Panc1 (cell line): ENCODE measurements at regions of chr17 and their contacts with region 1.

Region 1: DNA sequence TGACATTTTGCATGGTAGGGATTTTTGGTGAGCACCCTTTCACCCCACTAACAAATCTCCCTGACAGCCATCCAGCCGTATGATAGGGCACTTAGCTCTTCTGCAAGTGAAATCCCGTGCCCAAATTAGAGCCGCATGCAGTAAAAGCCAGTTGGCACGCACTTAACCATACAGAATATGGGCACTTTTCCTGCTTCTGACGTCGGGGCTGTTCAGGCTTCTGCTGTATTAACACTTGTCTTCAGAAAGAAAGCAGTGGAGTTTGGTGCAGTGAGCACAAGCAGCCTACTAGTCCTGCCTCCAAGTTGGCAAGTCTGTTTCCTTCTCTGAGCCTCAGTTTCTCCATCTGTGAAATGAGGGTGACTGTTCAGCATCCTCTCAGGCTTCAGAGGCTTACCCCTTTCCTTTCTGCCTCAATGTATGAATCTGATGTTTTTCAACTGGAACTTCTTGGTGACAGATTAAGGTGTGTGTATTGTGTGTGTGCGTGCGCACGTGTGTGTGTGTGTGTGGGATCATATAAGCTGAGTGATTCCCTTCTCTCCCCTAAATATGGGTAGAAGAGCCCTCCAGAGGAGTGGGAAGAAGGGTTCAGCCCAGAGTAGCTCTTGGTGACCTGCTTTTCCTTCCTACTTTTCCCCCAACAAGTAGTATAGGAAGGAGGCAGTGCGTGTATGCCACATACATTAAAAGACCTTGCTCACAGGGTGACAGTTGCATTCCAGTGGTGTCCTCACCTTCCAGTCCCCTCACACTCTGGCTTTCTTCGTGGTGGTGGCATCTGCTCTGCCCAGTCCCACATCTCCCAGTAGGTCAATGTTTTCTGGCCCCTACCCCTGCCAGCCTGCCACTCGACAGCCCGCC is 19.0 kb downstream of the IGF2BP1 start:
- DNase-seq: no peak
- ATAC-seq: peak; percentile 52
- H3K4me3 ChIP-seq: no peak overlapping the region
- H3K27ac ChIP-seq: no peak overlapping the region
- H3K4me1 ChIP-seq: peaks cover 28% of the 10 kb centered on the region
- H3K27me3 ChIP-seq: no peaks in the 10 kb centered on the region
- CTCF ChIP-seq: no peak

Region 2: DNA sequence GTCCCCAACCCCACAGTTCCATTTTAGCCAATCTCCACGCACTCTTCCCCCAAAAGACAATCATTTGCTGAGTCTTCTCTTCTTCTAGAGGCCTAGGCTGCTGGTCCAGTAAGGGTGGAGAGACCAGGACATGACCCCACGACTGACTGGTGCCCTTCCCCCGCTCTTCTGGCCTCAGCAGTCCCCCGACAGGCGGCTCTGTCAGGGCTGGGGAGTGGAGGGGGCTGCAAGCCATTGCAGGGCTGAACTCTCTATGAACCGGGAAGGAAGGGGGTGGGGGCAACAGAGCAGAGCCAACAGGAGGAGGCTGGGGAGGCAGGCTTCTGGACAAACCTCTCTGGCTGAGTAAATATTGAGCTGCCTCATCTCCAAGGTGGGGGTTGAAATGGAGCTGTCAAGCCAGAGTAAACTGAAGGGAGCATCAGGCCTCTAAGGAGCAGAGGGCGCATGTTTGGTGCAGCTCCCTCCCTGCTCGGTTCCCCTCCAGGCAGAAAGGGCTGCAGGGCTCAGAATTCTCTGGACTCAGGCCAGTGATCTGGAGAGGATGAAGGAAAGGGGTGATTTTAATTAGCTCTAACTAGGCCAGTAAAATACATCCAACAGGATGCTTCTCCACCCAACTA is 494.0 kb before region 1 on chr17:
- CTCF ChIA-PET with region 1: no interaction called
- POLR2A ChIA-PET with region 1: no interaction called
- in situ Hi-C with region 1: no loop called
- intact Hi-C with region 1: no loop called
- DNase-seq: no peak
- ATAC-seq: 0 out of 2 replicates have a peak, but pooled peaks have one; percentile 39
- H3K4me3 ChIP-seq: no peak overlapping the region
- H3K27ac ChIP-seq: peak overlapping the region; percentile 1; the same call in 1 of the 2 replicates
- H3K4me1 ChIP-seq: peaks cover 17% of the 10 kb centered on the region
- H3K27me3 ChIP-seq: no peaks in the 10 kb centered on the region
- CTCF ChIP-seq: no peak

Region 3: DNA sequence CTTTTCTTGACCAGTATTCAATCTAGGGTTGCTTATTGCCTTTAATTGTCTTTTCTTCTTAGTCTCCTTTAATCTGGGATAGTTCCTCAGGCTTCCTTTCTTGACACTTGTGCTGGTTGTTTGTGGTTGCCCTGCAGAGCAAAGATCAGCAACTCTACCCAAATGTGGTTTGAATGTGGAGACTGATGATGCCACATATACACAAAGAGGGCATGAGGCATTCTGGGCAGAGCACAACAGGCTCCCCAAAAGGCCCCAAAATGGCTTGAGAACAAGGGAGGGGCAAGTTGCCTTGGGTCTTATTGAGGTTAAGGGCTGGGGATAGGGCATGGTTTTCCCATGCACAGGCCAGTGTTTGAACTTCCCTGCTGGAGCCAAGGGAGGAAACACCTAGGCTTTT is 360.2 kb before region 1 on chr17:
- CTCF ChIA-PET with region 1: no interaction called
- POLR2A ChIA-PET with region 1: no interaction called
- in situ Hi-C with region 1: no loop called
- intact Hi-C with region 1: no loop called
- DNase-seq: no peak
- ATAC-seq: no peak
- H3K4me3 ChIP-seq: no peak overlapping the region
- H3K27ac ChIP-seq: no peak overlapping the region
- H3K4me1 ChIP-seq: no peaks in the 10 kb centered on the region
- H3K27me3 ChIP-seq: no peaks in the 10 kb centered on the region
- CTCF ChIP-seq: no peak

Region 4: DNA sequence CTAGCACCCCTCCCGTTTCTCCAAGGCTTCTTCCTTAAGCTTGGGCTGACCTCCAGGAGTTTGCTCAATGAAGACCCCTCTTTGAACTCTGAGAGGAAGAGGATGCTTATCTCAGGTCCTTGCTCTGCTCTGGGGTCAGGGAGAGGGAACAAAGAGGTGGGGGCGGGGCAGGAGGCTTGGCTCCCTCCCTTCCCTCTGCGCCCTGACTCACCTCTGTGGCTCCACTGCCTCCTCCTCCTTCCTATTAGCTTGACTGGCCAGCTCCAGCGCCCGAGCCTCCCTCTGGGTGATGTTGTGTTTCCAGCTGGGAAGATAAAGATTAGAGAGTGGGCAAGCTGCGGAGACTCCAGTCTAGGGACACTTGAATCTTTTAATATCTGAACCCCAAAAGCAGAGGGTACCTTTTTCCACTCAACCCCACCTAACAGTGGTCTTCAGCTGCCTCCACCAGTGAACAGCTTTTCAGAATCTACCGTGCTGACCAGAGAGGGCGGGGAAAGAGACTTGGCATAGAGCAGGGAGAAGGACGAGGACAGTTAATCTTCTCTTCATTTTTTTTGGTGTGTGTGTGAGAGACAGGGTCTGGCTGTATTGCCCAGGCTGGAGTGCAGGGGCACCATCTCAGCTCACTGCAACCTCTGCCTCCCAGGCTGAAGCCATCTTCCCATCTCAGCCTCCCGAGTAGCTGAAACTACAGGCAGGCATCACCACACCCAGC is 54.5 kb before region 1 on chr17:
- CTCF ChIA-PET with region 1: no interaction called
- POLR2A ChIA-PET with region 1: interaction called, 12 read pairs
- in situ Hi-C with region 1: no loop called
- intact Hi-C with region 1: no loop called
- DNase-seq: no peak
- ATAC-seq: peak; percentile 92
- H3K4me3 ChIP-seq: peak overlapping the region in 1 of 2 experiments; percentile 38; a peak in 2 of 4 replicates
- H3K27ac ChIP-seq: peak overlapping the region; percentile 25
- H3K4me1 ChIP-seq: peaks cover 17% of the 10 kb centered on the region
- H3K27me3 ChIP-seq: no peaks in the 10 kb centered on the region
- CTCF ChIP-seq: no peak

Region 5: DNA sequence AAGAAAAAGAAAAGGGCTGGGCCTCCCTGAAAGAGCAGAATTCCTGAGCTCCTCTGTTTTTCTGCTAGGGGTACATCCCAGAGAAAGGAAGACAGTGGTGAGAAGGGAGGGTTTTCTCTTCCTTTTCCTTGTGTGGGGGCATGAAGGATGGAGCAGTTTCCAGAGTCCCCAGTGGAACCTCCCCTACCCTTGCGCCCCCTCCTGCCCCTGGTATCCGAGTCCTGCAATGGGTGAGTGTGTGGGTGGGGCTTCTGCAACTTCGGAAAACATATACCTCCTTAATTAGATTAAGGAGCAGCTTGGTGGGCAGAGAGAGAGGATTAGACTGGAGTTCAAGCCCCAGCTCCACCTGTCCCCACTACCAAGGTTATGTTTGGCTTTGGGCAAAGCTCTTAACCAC is 42.4 kb before region 1 on chr17:
- CTCF ChIA-PET with region 1: interaction called, 14 read pairs
- POLR2A ChIA-PET with region 1: no interaction called
- in situ Hi-C with region 1: no loop called
- intact Hi-C with region 1: no loop called
- DNase-seq: no peak
- ATAC-seq: no peak
- H3K4me3 ChIP-seq: no peak overlapping the region
- H3K27ac ChIP-seq: peak overlapping the region; percentile 81; the same call in 1 of the 2 replicates
- H3K4me1 ChIP-seq: peaks cover 37% of the 10 kb centered on the region
- H3K27me3 ChIP-seq: no peaks in the 10 kb centered on the region
- CTCF ChIP-seq: no peak

Region 6: GRCh38 chr17:48985436-48986245 is 30.5 kb before region 1 on chr17:
- CTCF ChIA-PET with region 1: interaction called, 3 read pairs
- POLR2A ChIA-PET with region 1: interaction called, 12 read pairs
- in situ Hi-C with region 1: no loop called
- intact Hi-C with region 1: no loop called
- DNase-seq: no peak
- ATAC-seq: peak; percentile 17; the same call in 1 of the 2 replicates
- H3K4me3 ChIP-seq: no peak overlapping the region
- H3K27ac ChIP-seq: no peak overlapping the region
- H3K4me1 ChIP-seq: peaks cover 10% of the 10 kb centered on the region
- H3K27me3 ChIP-seq: no peaks in the 10 kb centered on the region
- CTCF ChIP-seq: no peak

Region 7: GRCh38 chr17:49076573-49077384 is 60.6 kb after region 1 on chr17:
- CTCF ChIA-PET with region 1: no interaction called
- POLR2A ChIA-PET with region 1: no interaction called
- in situ Hi-C with region 1: no loop called
- intact Hi-C with region 1: no loop called
- DNase-seq: peak; percentile 45
- ATAC-seq: peak; percentile 80
- H3K4me3 ChIP-seq: no peak overlapping the region
- H3K27ac ChIP-seq: no peak overlapping the region
- H3K4me1 ChIP-seq: no peaks in the 10 kb centered on the region
- H3K27me3 ChIP-seq: no peaks in the 10 kb centered on the region
- CTCF ChIP-seq: no peak